Caco-2 (cell line): ENCODE measurements at regions of chr17 and their contacts with region 1.

Region 1: GRCh38 chr17:17919169-17920107 is 52.8 kb downstream of the TOM1L2 start:
- DNase-seq: peak; percentile 87 to 90
- H3K4me3 ChIP-seq: no peak overlapping the region
- H3K4me3 Mint-ChIP-seq: no peak overlapping the region
- H3K27ac Mint-ChIP-seq: peak overlapping the region; percentile 79
- H3K4me1 ChIP-seq: peaks cover 58% of the 10 kb centered on the region
- H3K4me1 Mint-ChIP-seq: peaks cover 31% of the 10 kb centered on the region
- H3K27me3 ChIP-seq: no peaks in the 10 kb centered on the region
- H3K27me3 Mint-ChIP-seq: no peaks in the 10 kb centered on the region
- CTCF ChIP-seq: peak; percentile 71 to 98

Region 2: GRCh38 chr17:17812211-17813057 is 107.0 kb before region 1 on chr17:
- CTCF ChIA-PET with region 1: interaction called, 9 read pairs
- POLR2A ChIA-PET with region 1: no interaction called
- intact Hi-C with region 1: loop called (anchors 1 kb)
- DNase-seq: peak; percentile 66 to 85
- H3K4me3 ChIP-seq: no peak overlapping the region
- H3K4me3 Mint-ChIP-seq: no peak overlapping the region
- H3K27ac Mint-ChIP-seq: peak overlapping the region; percentile 16
- H3K4me1 ChIP-seq: peaks cover 12% of the 10 kb centered on the region
- H3K4me1 Mint-ChIP-seq: no peaks in the 10 kb centered on the region
- H3K27me3 ChIP-seq: no peaks in the 10 kb centered on the region
- H3K27me3 Mint-ChIP-seq: no peaks in the 10 kb centered on the region
- CTCF ChIP-seq: peak; percentile 96 to 99

Region 3: DNA sequence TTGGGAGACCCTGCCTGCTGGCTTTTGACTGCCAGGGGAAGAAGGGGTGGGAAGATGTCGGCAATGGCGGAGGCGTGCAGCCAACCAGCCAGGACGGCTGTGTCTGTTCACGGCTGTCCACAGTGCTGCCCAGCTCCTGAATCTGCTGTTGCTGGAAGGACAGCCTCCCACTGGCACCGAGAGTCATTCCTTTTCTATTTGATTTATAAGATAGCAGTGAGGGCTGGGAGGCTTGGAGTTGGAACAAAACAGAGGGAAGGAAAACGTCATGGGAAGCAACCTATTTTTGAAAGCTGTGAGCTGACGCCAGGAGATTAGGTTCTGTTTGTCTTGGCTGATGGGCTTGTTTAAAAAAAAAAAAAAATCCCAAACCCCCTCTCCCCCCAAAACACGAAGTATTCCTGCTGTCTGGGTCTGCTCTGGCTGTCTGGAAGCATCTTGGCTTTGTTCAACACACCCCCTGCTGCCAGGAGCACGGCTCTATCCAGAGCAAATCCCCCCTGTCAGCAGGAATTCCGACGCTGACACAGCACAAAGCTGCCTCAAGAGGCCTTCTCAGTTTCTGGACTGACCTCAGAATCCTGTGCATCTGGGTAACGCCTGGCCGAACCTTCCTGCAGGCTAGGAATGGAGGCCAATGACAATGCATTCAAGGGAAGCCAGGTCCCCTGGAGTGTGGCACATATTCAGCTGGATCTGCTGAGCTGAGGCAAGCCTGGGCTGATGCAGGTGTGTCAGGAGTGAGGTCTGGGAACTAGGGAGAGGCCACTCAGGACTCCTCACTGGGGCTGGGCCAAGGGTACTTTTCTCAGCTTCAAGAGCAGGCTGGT is 41.7 kb before region 1 on chr17:
- CTCF ChIA-PET with region 1: interaction called, 6 read pairs
- POLR2A ChIA-PET with region 1: no interaction called
- intact Hi-C with region 1: loop called (anchors 5 kb)
- DNase-seq: no peak
- H3K4me3 ChIP-seq: no peak overlapping the region
- H3K4me3 Mint-ChIP-seq: no peak overlapping the region
- H3K27ac Mint-ChIP-seq: no peak overlapping the region
- H3K4me1 ChIP-seq: no peaks in the 10 kb centered on the region
- H3K4me1 Mint-ChIP-seq: no peaks in the 10 kb centered on the region
- H3K27me3 ChIP-seq: no peaks in the 10 kb centered on the region
- H3K27me3 Mint-ChIP-seq: no peaks in the 10 kb centered on the region
- CTCF ChIP-seq: no peak

Region 4: DNA sequence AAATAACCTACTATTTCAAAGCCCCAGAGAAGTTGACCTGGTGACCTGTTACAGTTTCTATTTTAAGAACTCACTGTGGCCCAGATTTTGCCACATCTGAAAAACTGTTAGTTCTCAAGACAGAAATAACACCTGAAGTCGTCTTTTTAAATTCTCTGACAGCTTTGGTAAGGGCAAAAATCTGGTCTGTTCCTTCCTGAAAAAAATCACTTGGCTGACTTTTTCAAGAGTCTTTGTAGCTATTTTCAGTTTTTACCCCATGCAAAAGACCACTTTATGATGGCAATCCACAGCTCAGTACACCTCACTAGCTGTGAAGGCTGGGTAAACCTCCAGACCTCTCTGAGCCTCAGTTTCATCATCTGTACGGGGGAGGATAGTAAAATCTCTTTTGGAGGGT is 22.0 kb before region 1 on chr17:
- CTCF ChIA-PET with region 1: interaction called, 92 read pairs
- POLR2A ChIA-PET with region 1: interaction called, 11 read pairs
- intact Hi-C with region 1: no loop called
- DNase-seq: no peak
- H3K4me3 ChIP-seq: no peak overlapping the region
- H3K4me3 Mint-ChIP-seq: no peak overlapping the region
- H3K27ac Mint-ChIP-seq: no peak overlapping the region
- H3K4me1 ChIP-seq: peaks cover 22% of the 10 kb centered on the region
- H3K4me1 Mint-ChIP-seq: peaks cover 10% of the 10 kb centered on the region
- H3K27me3 ChIP-seq: no peaks in the 10 kb centered on the region
- H3K27me3 Mint-ChIP-seq: no peaks in the 10 kb centered on the region
- CTCF ChIP-seq: no peak

Region 5: DNA sequence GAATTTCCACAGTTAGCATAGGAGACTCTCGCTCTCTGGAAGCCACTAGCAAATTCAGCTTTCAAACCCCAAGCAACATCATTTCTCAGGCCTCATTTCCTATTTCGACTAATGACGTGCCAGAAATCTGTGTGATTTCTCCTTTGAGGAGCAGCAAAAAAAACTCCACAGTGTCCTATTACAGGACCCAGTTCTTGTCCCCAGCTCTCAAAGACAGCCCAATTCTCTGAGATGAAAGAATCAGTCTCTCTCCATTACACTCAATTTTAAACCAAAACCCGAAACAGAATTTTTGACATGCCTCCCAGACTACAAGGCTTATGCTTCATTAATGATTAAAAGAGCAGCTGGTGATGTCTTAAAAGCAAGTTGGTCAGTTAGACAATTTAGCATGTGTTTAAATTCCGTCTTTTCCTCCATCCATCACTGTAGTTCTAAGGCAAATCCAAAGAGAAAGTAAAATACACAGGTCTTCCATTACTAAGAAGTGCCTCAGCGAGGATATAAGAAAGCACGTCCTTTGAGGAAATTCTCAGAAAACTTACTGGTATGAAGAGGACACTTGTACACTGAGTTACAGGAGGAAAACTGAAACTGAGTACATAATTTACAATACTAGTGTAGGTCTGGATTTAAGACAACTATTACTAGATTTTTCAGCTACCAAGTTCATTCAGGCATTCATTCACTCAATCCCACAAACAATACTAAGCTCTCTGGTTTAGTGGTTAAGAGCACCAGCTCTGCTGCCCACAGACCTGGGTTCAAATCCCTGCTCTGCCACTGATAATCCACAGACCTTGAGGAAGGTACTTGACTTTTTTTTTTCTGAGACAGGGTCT is 40.3 kb after region 1 on chr17:
- CTCF ChIA-PET with region 1: interaction called, 4 read pairs
- POLR2A ChIA-PET with region 1: interaction called, 4 read pairs
- intact Hi-C with region 1: loop called (anchors 2 kb)
- DNase-seq: no peak
- H3K4me3 ChIP-seq: no peak overlapping the region
- H3K4me3 Mint-ChIP-seq: peak overlapping the region; percentile 65
- H3K27ac Mint-ChIP-seq: peak overlapping the region; percentile 80
- H3K4me1 ChIP-seq: peaks cover 50% of the 10 kb centered on the region
- H3K4me1 Mint-ChIP-seq: peaks cover 44% of the 10 kb centered on the region
- H3K27me3 ChIP-seq: no peaks in the 10 kb centered on the region
- H3K27me3 Mint-ChIP-seq: no peaks in the 10 kb centered on the region
- CTCF ChIP-seq: no peak

Region 6: DNA sequence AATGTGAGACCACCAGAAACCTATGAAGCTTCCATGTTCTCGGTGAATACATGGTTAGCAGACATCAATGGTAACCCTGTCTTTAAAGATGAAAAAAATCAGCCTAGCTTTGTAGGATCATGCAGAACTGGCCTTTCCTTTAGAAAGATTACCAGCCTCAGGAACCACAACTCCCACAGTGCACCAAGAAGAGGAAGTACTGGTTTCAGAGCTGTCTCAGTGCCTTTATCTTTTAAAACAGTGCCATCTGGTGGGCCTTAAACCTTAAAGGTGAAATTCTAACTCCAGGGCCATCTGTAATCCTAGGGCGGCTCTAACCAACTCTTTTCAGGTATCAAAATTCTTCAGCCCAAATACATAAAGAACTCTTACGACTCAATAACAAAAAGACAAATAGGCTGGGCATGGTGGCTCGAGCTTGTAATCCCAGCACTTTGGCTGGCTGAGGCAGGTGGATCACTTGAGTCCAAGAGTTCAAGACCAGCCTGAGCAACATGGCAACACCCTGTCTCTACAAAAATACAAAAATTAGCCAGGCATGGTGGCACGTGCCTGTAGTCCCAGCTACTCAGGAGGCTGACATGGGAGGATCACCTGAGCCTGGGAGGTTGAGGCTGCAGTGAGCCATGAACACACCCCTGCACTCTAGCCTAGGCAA is 114.1 kb after region 1 on chr17:
- CTCF ChIA-PET with region 1: interaction called, 19 read pairs
- POLR2A ChIA-PET with region 1: no interaction called
- intact Hi-C with region 1: loop called (anchors 1 kb)
- DNase-seq: peak; percentile 66 to 75
- H3K4me3 ChIP-seq: no peak overlapping the region
- H3K4me3 Mint-ChIP-seq: no peak overlapping the region
- H3K27ac Mint-ChIP-seq: no peak overlapping the region
- H3K4me1 ChIP-seq: peaks cover 11% of the 10 kb centered on the region
- H3K4me1 Mint-ChIP-seq: peaks cover 14% of the 10 kb centered on the region
- H3K27me3 ChIP-seq: no peaks in the 10 kb centered on the region
- H3K27me3 Mint-ChIP-seq: no peaks in the 10 kb centered on the region
- CTCF ChIP-seq: peak; percentile 75 to 81